Activated naive CD8-positive, alpha-beta T cell treated with anti-CD3 and anti-CD28 coated beads, Interleukin-2, amount 10 ng/mL, durations not matched to agents 7 days and 5 days (primary cell): ENCODE measurements at regions of chr12 and their contacts with region 1.

Region 1: DNA sequence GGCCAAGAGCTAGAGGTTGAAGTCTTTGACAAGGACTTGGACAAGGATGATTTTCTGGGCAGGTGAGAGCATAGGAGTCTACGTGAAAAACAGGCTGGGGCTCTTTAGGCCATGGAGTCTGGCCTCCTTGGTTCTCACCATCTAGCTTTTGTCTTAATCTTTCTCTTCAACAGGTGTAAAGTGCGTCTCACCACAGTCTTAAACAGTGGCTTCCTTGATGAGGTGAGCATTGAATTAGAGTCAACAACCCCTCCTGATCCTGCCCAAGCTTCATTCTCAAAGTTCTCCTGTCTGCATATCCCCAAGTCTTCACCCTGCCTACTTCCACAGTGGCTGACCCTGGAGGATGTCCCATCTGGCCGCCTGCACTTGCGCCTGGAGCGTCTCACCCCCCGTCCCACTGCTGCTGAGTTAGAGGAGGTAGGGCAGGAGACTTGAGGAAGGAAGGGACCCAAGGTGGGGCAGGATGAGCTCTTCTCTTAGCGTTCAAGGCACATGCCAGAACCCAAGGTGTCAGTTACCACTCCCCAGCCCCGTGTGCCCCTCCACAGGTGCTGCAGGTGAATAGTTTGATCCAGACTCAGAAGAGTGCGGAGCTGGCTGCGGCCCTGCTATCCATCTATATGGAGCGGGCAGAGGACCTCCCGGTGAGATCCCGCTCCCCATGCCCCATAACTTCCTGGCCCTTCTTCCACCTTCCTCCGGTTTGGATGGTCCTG is 9.9 kb downstream of the ESYT1 start:
- DNase-seq: no peak
- ATAC-seq: no peak
- H3K4me3 Mint-ChIP-seq: peak overlapping the region; percentile 29
- H3K27ac Mint-ChIP-seq: peak overlapping the region; percentile 88
- H3K4me1 Mint-ChIP-seq: peaks cover 57% of the 10 kb centered on the region
- H3K27me3 Mint-ChIP-seq: no peaks in the 10 kb centered on the region

Region 2: DNA sequence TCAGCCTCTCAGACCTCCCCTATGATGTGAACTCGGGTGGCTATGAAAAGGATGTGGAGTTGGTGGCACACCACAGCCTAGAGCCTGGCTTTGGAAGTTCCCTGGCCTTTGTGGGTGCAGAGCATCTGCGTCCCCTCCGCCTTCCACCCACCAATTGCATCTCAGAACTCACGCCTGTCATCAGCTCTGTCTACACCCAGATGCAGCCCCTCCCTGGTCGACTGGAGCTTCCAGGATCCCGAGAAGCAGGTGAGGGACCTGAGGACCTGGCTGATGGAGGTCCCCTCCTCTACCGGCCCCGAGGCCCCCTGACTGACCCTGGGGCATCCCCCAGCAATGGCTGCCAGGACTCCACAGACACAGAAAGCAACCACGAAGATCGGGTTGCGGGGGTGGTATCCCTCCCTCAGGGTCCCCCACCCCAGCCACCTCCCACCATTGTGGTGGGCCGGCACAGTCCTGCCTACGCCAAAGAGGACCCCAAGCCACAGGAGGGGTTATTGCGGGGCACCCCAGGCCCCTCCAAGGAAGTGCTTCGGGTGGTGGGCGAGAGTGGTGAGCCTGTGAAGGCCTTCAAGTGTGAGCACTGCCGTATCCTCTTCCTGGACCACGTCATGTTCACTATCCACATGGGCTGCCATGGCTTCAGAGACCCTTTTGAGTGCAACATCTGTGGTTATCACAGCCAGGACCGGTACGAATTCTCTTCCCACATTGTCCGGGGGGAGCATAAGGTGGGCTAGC is 103.3 kb before region 1 on chr12:
- POLR2A ChIA-PET with region 1: no interaction called
- DNase-seq: peak; percentile 54
- ATAC-seq: peak; percentile 66
- H3K4me3 Mint-ChIP-seq: peak overlapping the region; percentile 56
- H3K27ac Mint-ChIP-seq: peak overlapping the region; percentile 75
- H3K4me1 Mint-ChIP-seq: peaks cover 40% of the 10 kb centered on the region
- H3K27me3 Mint-ChIP-seq: no peaks in the 10 kb centered on the region

Region 3: DNA sequence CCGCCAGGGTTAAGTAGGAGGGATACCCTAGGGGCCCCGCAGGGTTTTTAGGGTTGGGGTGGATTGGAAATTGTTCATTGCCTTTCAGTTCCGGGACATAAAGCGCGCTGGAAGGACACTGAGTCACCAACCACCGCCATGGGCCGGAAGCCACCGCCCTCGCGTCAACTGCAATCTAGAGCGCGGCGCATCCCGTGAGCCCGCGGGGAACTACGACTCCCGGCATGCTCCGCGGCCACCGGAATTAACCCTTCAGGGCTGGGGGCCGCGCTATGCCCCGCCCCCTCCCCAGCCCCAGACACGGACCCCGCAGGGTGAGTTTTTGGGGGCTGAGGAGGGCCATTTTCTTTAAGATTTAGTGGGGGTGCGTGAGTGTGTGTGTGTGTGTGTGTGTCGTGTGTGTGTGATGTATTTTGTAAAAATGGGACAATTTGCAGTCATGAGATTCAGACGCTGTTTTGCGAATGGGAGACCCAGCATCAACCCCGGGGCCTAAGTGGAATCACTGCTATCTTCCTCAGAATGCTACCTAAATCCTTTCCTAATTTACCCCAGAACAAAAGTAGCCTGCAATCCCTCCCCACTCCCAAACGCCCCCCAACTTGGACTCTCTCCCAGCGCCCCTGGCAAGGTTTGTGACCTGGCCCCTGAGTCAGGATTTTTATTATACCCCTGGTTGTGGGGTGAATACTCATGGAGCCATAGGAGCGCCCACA is 14.5 kb after region 1 on chr12 and contains the start of gene MYL6B:
- POLR2A ChIA-PET with region 1: interaction called, 14 read pairs
- DNase-seq: peak; percentile 93
- ATAC-seq: peak; percentile 90
- H3K4me3 Mint-ChIP-seq: peak within 1 kb of the TSS; percentile 95
- H3K27ac Mint-ChIP-seq: peak within 1 kb of the TSS; percentile 100
- H3K4me1 Mint-ChIP-seq: peaks cover 36% of the 10 kb centered on the region
- H3K27me3 Mint-ChIP-seq: no peaks in the 10 kb centered on the region
- total RNA-seq, gene MYL6B: 46.6 to 47.8 TPM

Region 4: DNA sequence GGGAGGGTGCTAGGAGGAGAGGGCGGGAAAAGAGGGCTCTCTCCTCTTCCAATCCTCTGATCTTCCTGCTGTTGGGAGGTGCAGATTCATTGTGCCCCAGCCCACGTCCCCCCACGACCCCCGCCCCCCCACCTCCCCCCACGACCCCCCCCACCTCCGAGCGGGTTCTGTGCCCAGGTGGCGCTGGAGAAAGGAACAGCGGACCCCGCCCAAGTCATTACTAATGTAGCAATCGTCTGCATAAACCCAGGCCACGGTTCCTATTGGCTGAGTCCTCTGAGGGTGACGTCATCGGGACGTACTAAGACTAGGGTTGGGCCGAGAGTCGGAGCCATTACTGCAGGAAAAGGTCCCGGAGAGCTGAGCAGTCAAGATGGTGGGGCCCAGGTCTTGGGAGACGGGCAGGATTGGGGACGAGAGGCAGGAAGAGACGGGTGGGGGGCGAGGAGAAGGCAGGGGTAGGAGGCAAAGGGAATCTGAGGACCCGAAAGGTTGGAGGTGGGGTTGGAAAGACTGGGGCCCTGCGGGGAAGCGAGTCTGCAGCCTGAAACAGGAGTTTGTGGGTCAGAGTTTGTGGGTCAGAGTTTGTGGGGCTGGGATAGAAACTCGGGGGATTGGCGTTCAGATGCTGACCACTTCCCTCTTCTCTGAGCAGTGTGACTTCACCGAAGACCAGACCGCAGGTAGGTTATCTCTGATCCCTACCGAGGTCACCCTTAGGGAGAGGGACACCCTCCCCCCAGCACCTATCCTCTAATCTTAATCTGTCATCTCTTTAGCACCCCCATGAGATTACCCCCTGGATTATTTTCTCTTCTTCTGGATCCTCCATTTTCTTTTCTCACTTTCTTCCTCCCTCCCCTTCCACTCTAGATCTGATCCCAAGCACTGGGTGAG is 20.3 kb after region 1 on chr12 and contains the start of gene MYL6:
- POLR2A ChIA-PET with region 1: interaction called, 36 read pairs
- DNase-seq: peak; percentile 81
- ATAC-seq: peak; percentile 82
- H3K4me3 Mint-ChIP-seq: peak within 1 kb of the TSS; percentile 96
- H3K27ac Mint-ChIP-seq: peak within 1 kb of the TSS; percentile 97
- H3K4me1 Mint-ChIP-seq: peaks cover 38% of the 10 kb centered on the region
- H3K27me3 Mint-ChIP-seq: no peaks in the 10 kb centered on the region
- total RNA-seq, gene MYL6: 1,083 to 1,169 TPM